ENCODE measurements at regions of chr3 and their contacts with region 1.

Region 1: GRCh38 chr3:128464188-128464587 is 2.5 kb downstream of the DNAJB8 start:
- DNase-seq: peak in 3 of 4 experiments; percentile 37 to 49 (median 42)
- ATAC-seq: peak; percentile 80
- H3K4me3 ChIP-seq: no peak overlapping the region
- H3K27ac ChIP-seq: no peak overlapping the region
- H3K4me1 ChIP-seq: peaks cover 4 to 23% of the 10 kb centered on the region in 2 experiments; a peak in 4 of 5 replicates
- H3K27me3 ChIP-seq: peaks cover 4 to 21% of the 10 kb centered on the region in 2 experiments; a peak in 4 of 5 replicates
- CTCF ChIP-seq: peak; percentile 54 to 58 (median 57)
- EP300 ChIP-seq: no peak
- POLR2A ChIP-seq: no peak
- RAD21 ChIP-seq: peak in 1 of 2 experiments; percentile 48; a peak in 2 of 4 replicates

Region 2: DNA sequence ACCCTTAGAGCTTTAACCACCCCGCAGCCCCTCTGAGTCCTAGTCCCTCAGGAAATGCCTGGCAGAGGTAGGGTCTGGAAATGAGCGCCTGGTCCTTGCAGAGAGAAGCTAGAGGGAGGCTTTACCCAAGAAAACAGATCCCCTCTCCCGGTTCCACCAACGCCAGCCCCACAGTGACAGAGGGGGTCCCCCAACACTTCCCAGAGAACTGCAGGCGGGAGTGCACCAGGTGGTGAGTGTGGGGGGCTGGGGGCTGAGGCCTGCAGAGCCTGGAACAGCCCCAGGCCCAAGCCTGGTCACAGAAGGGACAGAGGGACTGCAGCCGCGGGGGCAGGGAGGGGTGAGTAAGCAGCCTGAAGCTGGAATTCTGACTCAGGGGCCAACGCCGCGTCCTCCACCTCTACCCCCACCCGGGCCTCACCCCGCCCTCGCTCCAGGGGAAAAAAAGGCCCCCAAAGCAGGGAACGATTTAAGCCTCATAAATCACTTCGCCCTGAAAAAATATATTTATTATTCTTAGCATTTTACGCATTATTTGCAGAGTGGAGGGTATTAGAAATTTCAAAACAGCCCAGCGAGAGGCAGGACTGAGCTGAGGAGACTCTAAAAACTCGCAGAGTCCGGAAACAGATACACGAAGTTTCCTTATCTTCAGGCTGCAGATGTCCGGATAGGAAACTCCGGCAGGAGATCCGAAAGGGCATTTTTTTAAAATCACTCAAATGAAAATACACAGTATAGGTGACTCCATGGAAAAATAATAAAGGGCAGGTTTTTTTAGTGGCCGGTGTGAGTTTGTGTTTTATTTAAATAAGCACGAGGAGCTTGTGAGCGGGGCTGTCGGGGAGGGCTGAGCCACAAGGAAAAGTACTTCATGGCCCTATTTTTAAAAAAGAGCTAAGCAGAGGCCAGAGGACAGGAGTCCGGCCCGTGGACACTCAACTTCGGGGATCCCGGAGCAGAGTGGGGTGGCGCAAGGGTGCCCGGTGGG is 18.8 kb after region 1 on chr3:
- CTCF ChIA-PET with region 1: no interaction called
- POLR2A ChIA-PET with region 1: interaction called, 20 read pairs
- in situ Hi-C with region 1: no loop called
- intact Hi-C with region 1: no loop called
- DNase-seq: peak; percentile 53 to 84 (median 64)
- ATAC-seq: peak; percentile 51
- H3K4me3 ChIP-seq: peak overlapping the region; percentile 98
- H3K27ac ChIP-seq: peak overlapping the region; percentile 98
- H3K4me1 ChIP-seq: peaks cover 17 to 59% of the 10 kb centered on the region in 2 experiments; a peak in 3 of 5 replicates
- H3K27me3 ChIP-seq: no peaks in the 10 kb centered on the region
- CTCF ChIP-seq: peak in 1 of 3 experiments; percentile 26; a peak in 2 of 6 replicates
- EP300 ChIP-seq: peak; percentile 87
- POLR2A ChIP-seq: peak; percentile 24; the same call in 1 of the 2 replicates
- RAD21 ChIP-seq: no peak

Measured in K562 (cell line).